Heart right ventricle (tissue), 16 donors: ENCODE measurements at regions of chr11 and their contacts with region 1.

Region 1: DNA sequence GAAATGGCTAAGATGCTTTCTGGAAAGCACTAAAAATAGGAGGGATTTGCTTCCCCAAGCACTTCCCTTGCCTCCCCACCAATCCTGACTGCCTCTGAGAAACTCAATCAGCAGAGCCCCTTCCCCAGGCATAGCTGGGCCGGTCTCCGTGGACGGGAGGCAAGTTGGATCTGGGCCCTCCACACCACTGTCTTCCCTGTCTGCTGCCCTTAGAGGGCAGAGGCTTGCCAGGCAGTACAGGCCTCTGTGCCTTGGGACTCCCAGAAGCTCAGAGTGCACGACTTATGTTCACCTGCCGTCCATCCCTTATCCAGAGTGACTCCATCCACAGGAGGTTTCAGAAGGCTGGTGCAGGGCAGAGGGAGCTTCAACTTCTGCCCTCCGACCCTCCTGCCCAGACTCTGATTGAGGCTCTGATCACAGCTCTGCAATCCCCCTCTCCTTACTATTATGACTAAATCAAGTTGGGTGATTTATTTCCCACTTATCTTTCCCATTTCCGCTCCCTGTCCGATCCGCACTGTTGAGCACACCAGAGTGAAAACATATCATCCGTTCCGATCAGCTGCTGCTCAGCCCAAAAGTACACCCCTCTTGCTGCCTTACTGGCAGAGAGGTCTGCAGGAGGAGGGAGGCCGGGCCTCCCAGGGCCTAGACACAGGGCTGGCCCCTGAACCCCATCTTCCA is 71.8 kb downstream of the DSCAML1 start:
- DNase-seq: no peak
- ATAC-seq: no peak
- H3K4me3 ChIP-seq: no peak overlapping the region
- H3K27ac ChIP-seq: no peak overlapping the region
- H3K4me1 ChIP-seq: peaks cover 0 to 12% (median 0%) of the 10 kb centered on the region in 9 donors
- H3K27me3 ChIP-seq: peaks cover 0 to 3% (median 0%) of the 10 kb centered on the region in 7 donors
- CTCF ChIP-seq: no peak

Region 2: GRCh38 chr11:117678658-117679406 is 46.4 kb before region 1 on chr11:
- intact Hi-C with region 1: no loop called
- DNase-seq: no peak
- ATAC-seq: peak in 3 of 8 donors; percentile 17 to 44 (median 39)
- H3K4me3 ChIP-seq: no peak overlapping the region
- H3K27ac ChIP-seq: no peak overlapping the region
- H3K4me1 ChIP-seq: peaks cover 0 to 5% (median 0%) of the 10 kb centered on the region in 9 donors
- H3K27me3 ChIP-seq: peaks cover 0 to 5% (median 0%) of the 10 kb centered on the region in 7 donors
- CTCF ChIP-seq: no peak

Region 3: GRCh38 chr11:118007040-118007439 is 281.8 kb after region 1 on chr11:
- intact Hi-C with region 1: loop called in 1 of 10 experiments (anchors 5 kb)
- DNase-seq: no peak
- ATAC-seq: no peak
- H3K4me3 ChIP-seq: no peak overlapping the region
- H3K27ac ChIP-seq: peak overlapping the region in 3 of 10 donors; percentile 19 to 95 (median 60)
- H3K4me1 ChIP-seq: peaks cover 0 to 97% (median 12%) of the 10 kb centered on the region in 9 donors
- H3K27me3 ChIP-seq: peaks cover 0 to 4% (median 0%) of the 10 kb centered on the region in 7 donors
- CTCF ChIP-seq: no peak